MCF 10A (cell line): ENCODE measurements at regions of chr9 and their contacts with region 1.

Region 1: GRCh38 chr9:109469646-109470358 is 28.3 kb downstream of the PTPN3 start:
- DNase-seq: peak; percentile 88
- H3K4me3 Mint-ChIP-seq: no peak overlapping the region
- H3K27ac Mint-ChIP-seq: peak overlapping the region; percentile 67
- H3K4me1 Mint-ChIP-seq: peaks cover 49% of the 10 kb centered on the region
- H3K27me3 Mint-ChIP-seq: no peaks in the 10 kb centered on the region
- CTCF ChIP-seq: peak; percentile 91

Region 2: DNA sequence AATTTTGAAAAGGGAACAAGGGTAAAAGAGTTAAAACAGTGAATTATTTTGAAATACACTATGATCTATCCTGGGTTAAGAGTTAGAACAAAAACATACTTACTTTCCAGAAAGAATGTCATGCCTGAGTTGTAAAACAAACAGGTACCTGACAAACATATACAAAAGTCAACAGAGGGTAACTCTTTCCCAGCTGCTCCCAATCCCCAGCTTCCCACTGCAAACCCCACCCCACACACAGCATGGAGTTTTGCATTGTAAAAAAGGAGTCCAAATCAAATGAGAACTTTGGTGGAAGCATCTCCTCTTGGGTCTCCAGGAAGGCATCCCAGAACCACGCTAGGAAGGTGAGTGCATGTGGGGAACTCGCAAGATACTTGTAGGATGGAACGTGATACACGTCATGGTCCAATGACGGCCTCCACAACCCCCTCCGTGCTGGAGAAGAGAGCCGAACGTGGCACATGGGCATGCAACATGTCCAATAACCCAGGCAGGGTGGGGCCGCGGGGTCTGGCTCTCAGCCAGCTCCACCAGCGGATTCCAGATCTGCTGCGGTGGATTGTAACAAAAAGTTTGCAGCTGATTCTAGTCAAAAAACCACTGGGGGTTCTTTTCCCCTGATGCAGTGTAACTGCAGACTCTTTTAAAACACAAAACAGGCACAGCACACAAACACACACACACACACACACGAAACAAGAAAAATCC is 204.8 kb before region 1 on chr9:
- CTCF ChIA-PET with region 1: no interaction called
- POLR2A ChIA-PET with region 1: no interaction called
- intact Hi-C with region 1: no loop called
- DNase-seq: no peak
- H3K4me3 Mint-ChIP-seq: no peak overlapping the region
- H3K27ac Mint-ChIP-seq: no peak overlapping the region
- H3K4me1 Mint-ChIP-seq: no peaks in the 10 kb centered on the region
- H3K27me3 Mint-ChIP-seq: no peaks in the 10 kb centered on the region
- CTCF ChIP-seq: no peak

Region 3: GRCh38 chr9:109401168-109401989 is 68.4 kb before region 1 on chr9:
- CTCF ChIA-PET with region 1: interaction called, 3 read pairs
- POLR2A ChIA-PET with region 1: no interaction called
- intact Hi-C with region 1: loop called (anchors 1 kb)
- DNase-seq: peak; percentile 77
- H3K4me3 Mint-ChIP-seq: no peak overlapping the region
- H3K27ac Mint-ChIP-seq: peak overlapping the region; percentile 85
- H3K4me1 Mint-ChIP-seq: no peaks in the 10 kb centered on the region
- H3K27me3 Mint-ChIP-seq: no peaks in the 10 kb centered on the region
- CTCF ChIP-seq: peak; percentile 83

Region 4: DNA sequence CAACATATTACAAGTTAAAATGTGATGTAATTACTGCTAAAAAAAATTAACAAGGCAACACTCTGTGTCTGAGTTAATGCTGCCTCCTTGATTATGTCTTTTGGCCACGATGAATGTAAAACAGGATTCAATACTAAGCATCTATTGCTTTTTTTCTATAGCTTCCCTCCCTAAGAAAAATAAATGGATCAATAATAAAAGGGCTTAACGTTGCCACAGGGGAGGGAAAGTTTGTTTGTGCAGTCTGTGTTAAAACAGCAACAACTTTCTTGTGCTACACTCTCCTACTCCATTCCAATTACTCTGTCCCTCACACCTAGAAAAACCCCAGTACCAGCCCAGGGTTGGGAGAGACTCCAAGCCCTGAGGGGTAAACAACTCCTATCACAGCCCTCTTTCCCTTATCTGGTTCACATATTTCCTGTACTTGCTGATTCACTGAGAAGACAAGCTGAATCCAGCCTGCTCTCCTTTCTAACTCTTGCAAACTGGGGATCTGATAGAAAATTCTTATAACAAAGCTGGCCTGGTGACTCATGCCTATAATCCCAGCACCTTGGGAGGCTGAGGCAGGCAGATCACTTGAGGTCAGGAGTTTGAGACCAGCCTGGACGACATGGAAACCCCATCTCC is 16.5 kb before region 1 on chr9:
- CTCF ChIA-PET with region 1: interaction called, 225 read pairs
- POLR2A ChIA-PET with region 1: interaction called, 344 read pairs
- intact Hi-C with region 1: loop called (anchors 1 kb)
- DNase-seq: peak; percentile 85
- H3K4me3 Mint-ChIP-seq: peak overlapping the region; percentile 15
- H3K27ac Mint-ChIP-seq: peak overlapping the region; percentile 87
- H3K4me1 Mint-ChIP-seq: peaks cover 52% of the 10 kb centered on the region
- H3K27me3 Mint-ChIP-seq: no peaks in the 10 kb centered on the region
- CTCF ChIP-seq: no peak

Region 5: DNA sequence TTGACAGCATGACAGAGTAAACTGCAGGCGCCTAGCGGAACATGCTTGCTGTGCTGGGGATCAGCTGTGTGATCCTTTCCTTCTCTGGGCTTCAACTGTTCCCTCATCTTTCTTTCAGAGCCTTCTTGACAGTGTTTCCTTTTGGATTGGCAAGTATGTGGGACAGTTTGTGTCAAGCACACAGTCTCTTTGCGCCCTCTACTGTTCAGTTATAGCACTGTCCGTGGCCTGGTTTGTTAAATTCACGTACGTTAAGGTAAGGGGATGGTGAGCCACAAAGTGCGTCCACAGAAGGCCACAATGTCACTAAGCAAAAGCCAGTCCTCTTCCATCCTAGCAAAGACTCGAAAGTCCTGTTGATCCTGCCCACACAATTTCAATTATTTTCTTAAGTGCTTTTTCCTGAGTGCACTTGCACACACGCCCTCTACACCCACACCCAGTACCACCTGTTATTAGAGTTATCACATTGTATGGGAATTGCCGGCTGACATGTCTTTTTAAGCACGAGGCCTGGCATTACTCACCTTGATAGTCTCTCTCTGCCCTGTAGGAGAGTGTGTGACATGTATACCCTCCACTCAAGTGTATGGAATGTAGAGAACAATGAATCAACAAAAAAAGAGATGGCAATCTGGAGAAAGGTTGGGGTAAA is 50.8 kb after region 1 on chr9:
- CTCF ChIA-PET with region 1: interaction called, 26 read pairs
- POLR2A ChIA-PET with region 1: interaction called, 3 read pairs
- intact Hi-C with region 1: loop called (anchors 1 kb)
- DNase-seq: peak; percentile 82
- H3K4me3 Mint-ChIP-seq: no peak overlapping the region
- H3K27ac Mint-ChIP-seq: peak overlapping the region; percentile 49
- H3K4me1 Mint-ChIP-seq: peaks cover 10% of the 10 kb centered on the region
- H3K27me3 Mint-ChIP-seq: no peaks in the 10 kb centered on the region
- CTCF ChIP-seq: peak; percentile 85